GM12878 (cell line): ENCODE measurements at regions of chr15 and their contacts with region 1.

Region 1: DNA sequence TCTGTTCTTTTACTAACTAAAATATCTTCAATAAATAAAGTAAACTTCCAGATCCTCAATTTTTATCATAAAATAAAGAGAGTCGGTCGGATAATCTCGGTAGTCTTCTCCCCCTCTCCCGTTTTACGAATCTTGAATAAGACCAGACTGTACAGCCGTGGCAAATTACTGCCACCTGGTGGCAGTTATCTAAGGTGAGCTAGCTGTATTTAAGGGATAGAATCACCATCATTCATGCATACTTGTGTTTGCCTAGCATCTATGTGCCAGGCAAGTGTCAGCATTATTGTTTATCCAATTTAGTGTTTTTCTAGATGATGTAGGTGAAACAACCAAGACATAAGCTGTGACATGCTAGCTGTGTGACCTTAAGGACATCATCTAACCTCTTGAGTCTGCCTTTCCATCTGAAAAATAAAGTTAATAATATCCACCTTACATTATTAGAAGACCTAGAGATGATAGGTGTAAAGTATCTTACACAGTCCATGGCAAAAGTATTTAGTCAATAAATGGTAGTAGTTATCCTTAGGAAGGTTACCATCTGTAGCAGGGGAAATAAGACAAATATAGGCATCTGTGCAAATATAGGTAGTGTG is 21.3 kb downstream of the DUT start:
- DNase-seq: no peak
- ATAC-seq: peak; percentile 94
- H3K4me3 ChIP-seq: no peak overlapping the region
- H3K27ac ChIP-seq: no peak overlapping the region
- H3K4me1 ChIP-seq: no peaks in the 10 kb centered on the region
- H3K27me3 ChIP-seq: no peaks in the 10 kb centered on the region
- CTCF ChIP-seq: peak; percentile 74 to 82 (median 81)
- EP300 ChIP-seq: no peak
- POLR2A ChIP-seq: no peak
- RAD21 ChIP-seq: peak; percentile 82

Region 2: GRCh38 chr15:47196057-47196456 is 1156.5 kb before region 1 on chr15:
- CTCF ChIA-PET with region 1: interaction called, 14 read pairs
- POLR2A ChIA-PET with region 1: no interaction called
- RAD21 ChIA-PET with region 1: interaction called, 9 read pairs
- SMC1A ChIA-PET with region 1: interaction called, 7 read pairs
- in situ Hi-C with region 1: no loop called
- intact Hi-C with region 1: loop called (anchors 5 kb)
- DNase-seq: peak; percentile 13
- ATAC-seq: peak; percentile 97
- H3K4me3 ChIP-seq: no peak overlapping the region
- H3K27ac ChIP-seq: no peak overlapping the region
- H3K4me1 ChIP-seq: no peaks in the 10 kb centered on the region
- H3K27me3 ChIP-seq: no peaks in the 10 kb centered on the region
- CTCF ChIP-seq: peak; percentile 62 to 87 (median 79)
- EP300 ChIP-seq: no peak
- POLR2A ChIP-seq: no peak
- RAD21 ChIP-seq: peak; percentile 87

Region 3: DNA sequence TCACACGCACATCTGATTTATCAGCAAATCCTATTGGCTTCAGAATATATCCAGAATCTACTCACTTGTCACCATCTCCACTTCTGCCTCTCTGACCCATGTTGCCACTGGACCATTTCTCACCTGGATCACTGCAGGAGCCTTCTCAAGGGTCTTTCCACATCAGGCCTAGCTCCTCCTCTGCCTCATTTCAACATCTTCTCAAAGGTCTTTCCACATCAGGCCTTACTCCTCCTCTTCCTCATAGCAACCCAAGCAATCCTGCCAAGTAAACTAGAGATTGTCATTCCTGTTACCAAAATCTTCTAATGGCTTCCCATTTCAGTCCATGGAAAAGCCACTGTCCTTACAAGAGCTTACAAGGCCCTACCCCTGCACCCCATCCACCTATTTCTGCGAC is 39.4 kb before region 1 on chr15:
- CTCF ChIA-PET with region 1: interaction called, 11 read pairs
- POLR2A ChIA-PET with region 1: no interaction called
- RAD21 ChIA-PET with region 1: interaction called, 3 read pairs
- SMC1A ChIA-PET with region 1: no interaction called
- in situ Hi-C with region 1: no loop called
- intact Hi-C with region 1: no loop called
- DNase-seq: no peak
- ATAC-seq: no peak
- H3K4me3 ChIP-seq: no peak overlapping the region
- H3K27ac ChIP-seq: no peak overlapping the region
- H3K4me1 ChIP-seq: no peaks in the 10 kb centered on the region
- H3K27me3 ChIP-seq: no peaks in the 10 kb centered on the region; a peak in 1 of 4 replicates
- CTCF ChIP-seq: no peak
- EP300 ChIP-seq: no peak
- POLR2A ChIP-seq: no peak
- RAD21 ChIP-seq: no peak

Region 4: GRCh38 chr15:48330855-48331795 is 21.4 kb before region 1 on chr15 and contains the start of gene DUT:
- CTCF ChIA-PET with region 1: interaction called, 123 read pairs
- POLR2A ChIA-PET with region 1: interaction called, 3 read pairs
- RAD21 ChIA-PET with region 1: interaction called, 23 read pairs
- SMC1A ChIA-PET with region 1: interaction called, 43 read pairs
- in situ Hi-C with region 1: no loop called
- intact Hi-C with region 1: loop called (anchors 2 kb)
- DNase-seq: peak; percentile 39
- ATAC-seq: peak; percentile 91
- H3K4me3 ChIP-seq: peak within 1 kb of the TSS; percentile 91
- H3K27ac ChIP-seq: peak within 1 kb of the TSS; percentile 89
- H3K4me1 ChIP-seq: peaks cover 5% of the 10 kb centered on the region; the same call in 1 of the 2 replicates
- H3K27me3 ChIP-seq: no peaks in the 10 kb centered on the region
- CTCF ChIP-seq: no peak
- EP300 ChIP-seq: no peak
- POLR2A ChIP-seq: peak; percentile 94
- RAD21 ChIP-seq: no peak
- polyA plus RNA-seq, gene DUT: 20.1 to 88.1 TPM

Region 5: GRCh38 chr15:48800811-48801455 is 448.4 kb after region 1 on chr15:
- CTCF ChIA-PET with region 1: interaction called, 69 read pairs
- POLR2A ChIA-PET with region 1: no interaction called
- RAD21 ChIA-PET with region 1: interaction called, 50 read pairs
- SMC1A ChIA-PET with region 1: interaction called, 32 read pairs
- in situ Hi-C with region 1: no loop called
- intact Hi-C with region 1: loop called (anchors 5 kb)
- DNase-seq: no peak
- ATAC-seq: no peak
- H3K4me3 ChIP-seq: no peak overlapping the region
- H3K27ac ChIP-seq: no peak overlapping the region
- H3K4me1 ChIP-seq: peaks cover 12% of the 10 kb centered on the region
- H3K27me3 ChIP-seq: no peaks in the 10 kb centered on the region
- CTCF ChIP-seq: peak; percentile 21 to 43 (median 32); a peak in 4 of 6 replicates
- EP300 ChIP-seq: no peak
- POLR2A ChIP-seq: no peak
- RAD21 ChIP-seq: peak; percentile 66

Region 6: GRCh38 chr15:49421991-49422390 is 1069.4 kb after region 1 on chr15:
- CTCF ChIA-PET with region 1: interaction called, 6 read pairs
- POLR2A ChIA-PET with region 1: no interaction called
- RAD21 ChIA-PET with region 1: interaction called, 3 read pairs
- SMC1A ChIA-PET with region 1: interaction called, 10 read pairs
- in situ Hi-C with region 1: no loop called
- intact Hi-C with region 1: loop called (anchors 10 kb)
- DNase-seq: peak; percentile 12
- ATAC-seq: peak; percentile 72
- H3K4me3 ChIP-seq: no peak overlapping the region
- H3K27ac ChIP-seq: no peak overlapping the region
- H3K4me1 ChIP-seq: no peaks in the 10 kb centered on the region
- H3K27me3 ChIP-seq: no peaks in the 10 kb centered on the region
- CTCF ChIP-seq: peak; percentile 57 to 78 (median 66)
- EP300 ChIP-seq: no peak
- POLR2A ChIP-seq: no peak
- RAD21 ChIP-seq: peak; percentile 80

Region 7: GRCh38 chr15:49823987-49824538 is 1471.5 kb after region 1 on chr15:
- CTCF ChIA-PET with region 1: no interaction called
- POLR2A ChIA-PET with region 1: no interaction called
- RAD21 ChIA-PET with region 1: no interaction called
- SMC1A ChIA-PET with region 1: no interaction called
- in situ Hi-C with region 1: no loop called
- intact Hi-C with region 1: no loop called
- DNase-seq: no peak
- ATAC-seq: no peak
- H3K4me3 ChIP-seq: no peak overlapping the region
- H3K27ac ChIP-seq: no peak overlapping the region
- H3K4me1 ChIP-seq: no peaks in the 10 kb centered on the region
- H3K27me3 ChIP-seq: no peaks in the 10 kb centered on the region
- CTCF ChIP-seq: no peak
- EP300 ChIP-seq: no peak
- POLR2A ChIP-seq: no peak
- RAD21 ChIP-seq: no peak